Tibial artery (tissue), 4 donors: ENCODE measurements at regions of chr2 and their contacts with region 1.

Region 1: GRCh38 chr2:227125506-227125905 is 38.5 kb downstream of the COL4A4 start:
- DNase-seq: no peak
- H3K4me3 ChIP-seq: no peak overlapping the region
- H3K27ac ChIP-seq: no peak overlapping the region
- H3K4me1 ChIP-seq: no peaks in the 10 kb centered on the region
- H3K27me3 ChIP-seq: peaks cover 0 to 2% of the 10 kb centered on the region in 2 donors
- CTCF ChIP-seq: no peak

Region 2: GRCh38 chr2:227241005-227241404 is 115.5 kb after region 1 on chr2:
- intact Hi-C with region 1: loop called (anchors 5 kb)
- DNase-seq: no peak
- H3K4me3 ChIP-seq: no peak overlapping the region
- H3K27ac ChIP-seq: no peak overlapping the region
- H3K4me1 ChIP-seq: no peaks in the 10 kb centered on the region
- H3K27me3 ChIP-seq: no peaks in the 10 kb centered on the region
- CTCF ChIP-seq: no peak